H1 (cell line): ENCODE measurements at regions of chr11 and their contacts with region 1.

Region 1: DNA sequence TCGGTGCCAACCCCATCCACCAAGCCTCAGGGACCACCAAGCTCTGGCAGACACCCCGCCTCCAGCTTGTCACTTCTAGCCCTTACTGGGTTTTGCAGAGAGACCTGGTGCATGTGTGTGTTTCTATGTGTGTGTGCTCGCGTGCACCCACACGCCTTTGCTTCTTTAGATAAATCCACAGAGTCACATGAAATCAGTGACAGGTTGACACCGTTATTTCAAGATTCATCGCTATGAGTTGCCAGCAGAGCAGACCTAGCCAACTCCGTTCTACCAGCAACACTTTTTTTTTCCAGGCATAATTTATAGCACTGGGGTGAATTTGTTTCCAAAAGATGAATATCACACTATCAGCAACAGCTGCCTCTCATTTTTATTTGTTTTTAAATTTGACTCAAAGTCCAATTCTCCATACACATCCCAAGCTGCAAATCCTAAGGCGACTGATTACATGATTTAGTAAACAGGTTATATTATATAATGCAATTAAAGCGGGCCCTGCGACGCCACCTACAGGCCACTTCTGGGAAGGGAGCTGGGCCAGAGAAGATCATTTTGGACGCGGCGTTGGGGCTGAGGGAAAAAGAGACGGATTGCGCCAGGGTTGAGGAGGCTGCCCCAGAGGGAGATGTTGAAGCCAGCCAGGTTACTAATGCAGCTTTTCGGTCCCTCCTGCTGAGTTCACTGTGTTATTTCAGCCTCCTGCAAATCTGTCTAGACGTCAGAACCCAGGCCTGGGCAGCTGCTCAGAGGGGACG is 150.5 kb downstream of the FEZ1 start:
- DNase-seq: peak in 1 of 2 experiments; percentile 87
- H3K4me3 ChIP-seq: no peak overlapping the region
- H3K27ac ChIP-seq: no peak overlapping the region
- H3K4me1 ChIP-seq: peaks cover 0 to 29% (median 13%) of the 10 kb centered on the region in 4 experiments; a peak in 6 of 7 replicates
- H3K27me3 ChIP-seq: peaks cover 0 to 10% (median 3%) of the 10 kb centered on the region in 4 experiments; a peak in 3 of 7 replicates
- CTCF ChIP-seq: peak; percentile 82 to 85 (median 83)
- EP300 ChIP-seq: no peak
- POLR2A ChIP-seq: no peak
- RAD21 ChIP-seq: peak; percentile 71 to 81

Region 2: DNA sequence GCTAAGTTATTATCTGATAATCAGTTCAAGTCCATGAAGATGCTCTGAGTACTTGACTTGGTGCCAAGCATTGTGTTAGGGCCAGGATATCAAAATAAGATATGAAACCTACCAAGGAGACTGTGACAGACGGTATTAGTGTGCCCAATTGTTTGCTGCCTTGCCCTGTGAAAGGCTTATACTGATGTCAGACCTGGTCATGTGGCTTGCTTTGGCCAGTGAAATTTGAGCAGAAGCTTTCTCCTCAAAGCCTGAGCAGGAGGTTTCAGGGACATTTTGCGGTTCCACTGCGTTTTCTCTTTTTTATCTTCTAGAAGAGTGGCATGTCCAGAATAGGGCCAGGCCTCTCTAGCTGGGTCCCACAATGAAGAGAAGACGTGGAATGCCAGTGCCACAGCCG is 196.9 kb before region 1 on chr11:
- CTCF ChIA-PET with region 1: interaction called, 70 read pairs
- POLR2A ChIA-PET with region 1: no interaction called
- DNase-seq: no peak
- H3K4me3 ChIP-seq: no peak overlapping the region
- H3K27ac ChIP-seq: no peak overlapping the region
- H3K4me1 ChIP-seq: peaks cover 0 to 10% (median 8%) of the 10 kb centered on the region in 4 experiments; a peak in 4 of 7 replicates
- H3K27me3 ChIP-seq: peaks cover 0 to 8% (median 5%) of the 10 kb centered on the region in 4 experiments; a peak in 6 of 7 replicates
- CTCF ChIP-seq: no peak
- EP300 ChIP-seq: no peak
- POLR2A ChIP-seq: no peak
- RAD21 ChIP-seq: no peak

Region 3: GRCh38 chr11:125224391-125225010 is 121.1 kb before region 1 on chr11:
- CTCF ChIA-PET with region 1: interaction called, 27 read pairs
- POLR2A ChIA-PET with region 1: no interaction called
- DNase-seq: no peak
- H3K4me3 ChIP-seq: no peak overlapping the region
- H3K27ac ChIP-seq: peak overlapping the region; percentile 17; the same call in 1 of the 2 replicates
- H3K4me1 ChIP-seq: peaks cover 7 to 26% (median 18%) of the 10 kb centered on the region in 4 experiments
- H3K27me3 ChIP-seq: no peaks in the 10 kb centered on the region; a peak in 1 of 7 replicates
- CTCF ChIP-seq: peak; percentile 27 to 40 (median 34); a peak in 3 of 4 replicates
- EP300 ChIP-seq: no peak
- POLR2A ChIP-seq: no peak
- RAD21 ChIP-seq: peak; percentile 40 to 48

Region 4: DNA sequence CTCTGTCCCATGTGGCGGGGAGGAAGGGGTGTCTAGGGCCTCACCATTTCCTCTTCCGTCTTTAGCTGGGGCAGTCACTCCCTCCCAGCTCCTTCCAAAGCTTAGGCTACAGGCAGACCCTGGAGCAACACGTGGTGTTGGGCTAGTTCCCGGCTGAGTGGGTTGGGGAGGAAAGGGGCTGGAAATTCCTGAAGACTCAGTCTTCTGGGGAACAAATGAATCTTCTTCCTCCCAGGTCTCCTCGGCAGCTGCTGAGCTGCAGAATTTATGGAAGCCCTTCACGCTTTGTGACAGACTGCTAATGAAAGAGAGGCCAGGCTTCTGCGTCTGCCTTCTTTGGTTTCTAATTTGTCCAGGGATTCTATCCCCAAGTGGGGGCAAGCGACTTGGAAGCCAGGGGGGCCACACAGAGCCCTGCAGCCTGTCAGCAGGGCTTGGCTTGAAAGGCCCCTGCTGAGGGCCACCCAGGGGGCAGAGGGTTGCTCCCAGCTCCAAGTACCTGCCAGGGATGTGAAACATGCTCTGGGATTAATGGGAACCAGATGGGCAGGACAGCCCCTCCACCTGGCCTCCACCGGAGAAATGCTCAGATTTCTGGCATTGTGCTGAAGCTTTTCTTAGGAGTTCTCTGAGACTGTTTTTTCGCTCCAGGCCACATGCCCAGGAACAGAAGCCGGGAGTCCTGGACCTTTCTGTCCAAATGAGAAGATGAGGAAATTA is 57.9 kb before region 1 on chr11:
- CTCF ChIA-PET with region 1: interaction called, 81 read pairs
- POLR2A ChIA-PET with region 1: no interaction called
- DNase-seq: no peak
- H3K4me3 ChIP-seq: no peak overlapping the region
- H3K27ac ChIP-seq: no peak overlapping the region
- H3K4me1 ChIP-seq: peaks cover 0 to 9% (median 4%) of the 10 kb centered on the region in 4 experiments; a peak in 3 of 7 replicates
- H3K27me3 ChIP-seq: peaks cover 0 to 2% (median 0%) of the 10 kb centered on the region in 4 experiments; a peak in 2 of 7 replicates
- CTCF ChIP-seq: no peak
- EP300 ChIP-seq: no peak
- POLR2A ChIP-seq: no peak
- RAD21 ChIP-seq: no peak

Region 5: DNA sequence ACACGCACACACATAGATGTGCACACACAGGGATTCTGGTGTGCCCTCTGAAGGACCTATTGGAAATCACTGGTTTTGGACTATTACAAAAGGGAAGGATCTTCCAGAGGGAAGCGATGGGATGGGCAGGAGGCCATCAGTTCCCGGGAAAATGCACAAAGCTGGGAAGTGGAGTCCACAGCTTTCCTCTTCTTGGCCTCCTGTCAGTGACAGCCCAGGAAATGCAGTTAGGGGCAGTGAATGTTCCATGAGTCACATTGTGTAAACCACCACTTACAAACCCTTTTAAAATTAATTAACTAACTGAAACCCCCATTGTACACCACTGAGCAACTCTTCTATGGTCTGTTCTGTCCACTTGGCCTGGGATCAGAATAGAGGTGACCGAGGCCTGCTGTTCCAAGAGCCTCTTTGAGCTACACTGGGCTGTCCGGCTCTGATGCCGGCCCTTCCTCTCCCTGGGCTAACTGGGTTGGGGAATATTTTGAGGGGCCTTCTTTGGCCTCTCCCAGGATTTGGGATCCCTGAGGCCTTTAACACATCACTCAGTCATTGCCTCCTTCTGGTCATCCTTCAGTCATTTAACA is 12.7 kb after region 1 on chr11:
- CTCF ChIA-PET with region 1: interaction called, 315 read pairs
- POLR2A ChIA-PET with region 1: interaction called, 3 read pairs
- DNase-seq: no peak
- H3K4me3 ChIP-seq: no peak overlapping the region
- H3K27ac ChIP-seq: no peak overlapping the region
- H3K4me1 ChIP-seq: peaks cover 0 to 2% (median 0%) of the 10 kb centered on the region in 4 experiments; a peak in 1 of 7 replicates
- H3K27me3 ChIP-seq: no peaks in the 10 kb centered on the region
- CTCF ChIP-seq: no peak
- EP300 ChIP-seq: no peak
- POLR2A ChIP-seq: no peak
- RAD21 ChIP-seq: no peak

Region 6: GRCh38 chr11:125429166-125429707 is 83.6 kb after region 1 on chr11:
- CTCF ChIA-PET with region 1: interaction called, 234 read pairs
- POLR2A ChIA-PET with region 1: no interaction called
- DNase-seq: peak; percentile 58 to 90
- H3K4me3 ChIP-seq: no peak overlapping the region; a peak in 1 of 8 replicates
- H3K27ac ChIP-seq: no peak overlapping the region
- H3K4me1 ChIP-seq: peaks cover 0 to 12% (median 9%) of the 10 kb centered on the region in 4 experiments; a peak in 5 of 7 replicates
- H3K27me3 ChIP-seq: no peaks in the 10 kb centered on the region
- CTCF ChIP-seq: peak; percentile 82 to 96 (median 90)
- EP300 ChIP-seq: no peak
- POLR2A ChIP-seq: no peak
- RAD21 ChIP-seq: peak; percentile 94 to 95